ENCODE measurements at regions of chr10 and their contacts with region 1.

Region 1: GRCh38 chr10:45464958-45465567 is 91.0 kb downstream of the ALOX5 start:
- DNase-seq: peak; percentile 63
- H3K4me3 Mint-ChIP-seq: no peak overlapping the region
- H3K27ac Mint-ChIP-seq: no peak overlapping the region
- H3K4me1 Mint-ChIP-seq: peaks cover 29% of the 10 kb centered on the region
- H3K27me3 Mint-ChIP-seq: no peaks in the 10 kb centered on the region

Region 2: DNA sequence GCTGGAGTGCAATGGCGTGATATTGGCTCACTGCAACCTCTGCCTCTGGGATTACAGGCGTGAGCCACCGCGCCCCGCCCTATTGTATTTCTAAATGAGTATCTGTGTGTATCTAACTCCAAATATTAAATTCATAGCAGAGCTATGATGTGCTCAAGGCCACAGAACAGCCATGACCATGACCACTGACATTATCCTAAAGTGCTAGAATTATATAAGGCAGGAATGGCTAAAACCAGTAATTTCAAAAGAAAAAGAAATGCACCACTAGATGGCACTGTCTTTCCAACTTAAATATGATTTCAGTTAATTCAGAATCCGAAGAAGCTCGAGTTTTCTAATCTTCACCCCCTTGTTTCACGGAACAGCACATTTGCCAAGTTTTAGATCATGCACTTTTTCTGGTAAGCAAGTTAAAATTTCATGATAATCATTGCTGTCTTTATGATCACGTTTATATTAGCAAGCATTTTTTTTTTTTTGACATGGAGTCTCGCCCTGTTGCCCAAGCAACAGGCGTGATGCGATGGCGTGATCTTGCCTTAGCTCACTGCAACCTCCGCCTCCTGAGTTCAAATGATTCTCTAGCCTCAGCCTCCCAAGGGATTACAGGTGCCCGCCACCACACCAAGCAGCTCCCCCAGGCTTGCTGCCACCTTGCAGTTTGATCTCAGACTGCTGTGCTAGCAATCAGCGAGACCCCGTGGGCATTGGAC is 214.9 kb before region 1 on chr10:
- intact Hi-C with region 1: loop called (anchors 10 kb)
- DNase-seq: no peak
- H3K4me3 Mint-ChIP-seq: peak overlapping the region; percentile 34
- H3K27ac Mint-ChIP-seq: no peak overlapping the region
- H3K4me1 Mint-ChIP-seq: peaks cover 4% of the 10 kb centered on the region
- H3K27me3 Mint-ChIP-seq: peaks cover 20% of the 10 kb centered on the region

Region 3: DNA sequence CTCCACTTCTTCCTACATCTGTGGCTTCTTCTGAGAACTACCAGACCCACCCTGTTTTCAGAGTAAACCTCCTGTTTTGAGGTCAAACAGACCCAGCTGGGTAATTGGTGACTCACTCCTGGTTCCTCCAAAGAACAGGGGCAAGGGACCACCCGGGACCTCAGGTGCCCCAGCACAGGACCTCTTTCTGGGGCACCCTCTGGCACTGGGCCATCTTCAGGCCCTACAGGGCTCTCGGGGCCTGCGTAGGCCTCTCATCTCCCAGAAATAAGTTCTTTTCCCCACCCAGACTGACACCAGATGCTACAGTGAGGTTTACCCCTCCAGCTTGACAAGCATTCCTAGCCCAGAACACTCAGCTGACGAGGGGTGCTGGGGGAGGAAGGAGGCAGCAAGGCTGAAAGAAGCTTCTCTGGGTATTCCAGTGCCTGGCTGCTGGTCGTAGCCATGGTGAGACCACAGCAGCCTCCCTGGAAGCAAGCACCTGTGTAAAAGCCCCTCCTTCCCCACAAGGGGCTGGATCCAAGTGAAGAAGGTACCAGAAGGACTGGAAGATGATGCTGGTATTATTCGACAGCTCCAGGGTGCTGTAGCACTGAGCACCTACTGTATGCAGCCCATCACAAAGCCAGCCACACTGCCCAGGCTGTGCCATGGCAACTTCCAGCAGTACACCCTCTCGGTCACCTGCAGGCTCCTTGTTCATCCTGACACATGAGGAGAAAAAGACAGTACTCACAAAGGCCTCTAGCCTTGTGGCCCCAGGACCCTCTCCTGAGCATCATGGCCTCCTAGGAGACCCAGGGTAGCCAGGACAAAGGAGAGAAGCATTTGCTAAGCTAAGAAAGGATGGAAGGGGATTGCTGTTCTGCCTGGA is 43.6 kb before region 1 on chr10:
- intact Hi-C with region 1: no loop called
- DNase-seq: no peak
- H3K4me3 Mint-ChIP-seq: peak overlapping the region; percentile 23
- H3K27ac Mint-ChIP-seq: peak overlapping the region; percentile 74
- H3K4me1 Mint-ChIP-seq: peaks cover 53% of the 10 kb centered on the region
- H3K27me3 Mint-ChIP-seq: no peaks in the 10 kb centered on the region

Region 4: DNA sequence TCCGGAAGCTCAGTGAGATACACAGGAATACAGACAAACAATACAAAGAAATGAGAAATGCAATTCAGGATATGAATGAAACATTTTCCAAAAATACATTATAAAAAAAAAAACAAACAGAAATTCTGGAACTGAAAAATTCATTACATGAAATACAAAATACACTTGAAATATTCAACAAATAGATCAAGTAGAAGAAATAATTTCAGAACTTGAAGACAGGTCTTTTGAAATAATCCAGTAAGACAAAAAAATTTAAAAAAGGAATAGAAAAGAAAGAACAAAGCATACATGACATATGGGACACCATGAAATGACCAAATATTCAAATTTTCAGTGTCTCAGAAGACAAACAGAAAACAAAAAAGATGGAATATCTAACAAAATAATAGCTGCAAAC is 11.5 kb after region 1 on chr10:
- intact Hi-C with region 1: no loop called
- DNase-seq: no peak
- H3K4me3 Mint-ChIP-seq: no peak overlapping the region
- H3K27ac Mint-ChIP-seq: no peak overlapping the region
- H3K4me1 Mint-ChIP-seq: peaks cover 13% of the 10 kb centered on the region
- H3K27me3 Mint-ChIP-seq: no peaks in the 10 kb centered on the region

Region 5: GRCh38 chr10:45491091-45491490 is 26.0 kb after region 1 on chr10:
- intact Hi-C with region 1: no loop called
- DNase-seq: no peak
- H3K4me3 Mint-ChIP-seq: no peak overlapping the region
- H3K27ac Mint-ChIP-seq: no peak overlapping the region
- H3K4me1 Mint-ChIP-seq: peaks cover 4% of the 10 kb centered on the region
- H3K27me3 Mint-ChIP-seq: no peaks in the 10 kb centered on the region

Region 6: GRCh38 chr10:45505311-45505710 is 40.2 kb after region 1 on chr10:
- intact Hi-C with region 1: no loop called
- DNase-seq: no peak
- H3K4me3 Mint-ChIP-seq: no peak overlapping the region
- H3K27ac Mint-ChIP-seq: no peak overlapping the region
- H3K4me1 Mint-ChIP-seq: no peaks in the 10 kb centered on the region
- H3K27me3 Mint-ChIP-seq: peaks cover 4% of the 10 kb centered on the region

Measured in activated T-helper 2 cell treated with anti-CD3 and anti-CD28 coated beads, Interferon-gamma antibody, Interleukin-2, Interleukin-4, amounts not matched to agents 10 μg/mL and 5 μg/mL and 100 μg/mL, durations not matched to agents 14 hours and 24 hours and 36 hours (primary cell).